ENCODE measurements at regions of chr4 and their contacts with region 1.

Region 1: DNA sequence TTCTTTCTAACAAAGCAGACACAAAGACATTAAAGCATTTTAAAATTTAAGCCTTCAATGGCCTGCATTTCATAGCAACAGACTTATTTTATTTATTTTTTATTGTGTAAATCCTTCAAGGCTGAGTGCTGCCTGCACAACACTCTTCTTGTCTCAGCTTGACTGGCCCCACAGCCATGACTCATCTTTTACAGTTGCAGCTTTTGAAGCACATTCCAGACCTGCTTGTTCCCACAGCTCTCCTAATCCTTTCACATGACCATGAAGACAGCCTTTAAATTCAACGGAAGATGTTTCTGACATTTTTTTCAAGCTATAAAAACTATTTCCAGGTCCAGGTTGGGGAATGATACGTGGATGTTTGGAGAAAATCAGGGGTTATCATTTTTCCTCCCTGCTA is 276.9 kb upstream of the TACR3 start:
- DNase-seq: peak; percentile 96
- H3K4me3 Mint-ChIP-seq: peak overlapping the region; percentile 47
- H3K27ac Mint-ChIP-seq: peak overlapping the region; percentile 92
- H3K4me1 Mint-ChIP-seq: peaks cover 26% of the 10 kb centered on the region
- H3K27me3 Mint-ChIP-seq: no peaks in the 10 kb centered on the region
- CTCF ChIP-seq: no peak

Region 2: DNA sequence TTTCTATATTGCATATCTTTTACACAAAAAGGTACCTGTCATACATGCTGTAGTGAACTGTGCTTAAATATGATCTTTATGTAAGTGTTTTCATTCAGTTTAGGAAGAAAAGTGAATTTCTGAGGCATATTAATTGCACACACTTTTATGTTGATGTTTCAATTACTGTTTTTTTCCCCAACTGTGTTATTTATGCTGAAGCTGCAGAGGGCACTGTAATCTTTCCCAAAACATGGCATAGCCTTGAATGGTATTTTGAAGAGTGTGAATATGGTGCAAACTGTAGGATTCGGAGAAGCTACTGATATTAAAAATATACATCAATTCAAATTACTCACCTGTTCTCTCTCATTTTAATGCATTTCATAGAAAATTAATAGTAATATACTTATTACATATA is 792.5 kb before region 1 on chr4:
- CTCF ChIA-PET with region 1: interaction called, 3 read pairs
- POLR2A ChIA-PET with region 1: no interaction called
- intact Hi-C with region 1: loop called (anchors 10 kb)
- DNase-seq: peak; percentile 46
- H3K4me3 Mint-ChIP-seq: no peak overlapping the region
- H3K27ac Mint-ChIP-seq: no peak overlapping the region
- H3K4me1 Mint-ChIP-seq: no peaks in the 10 kb centered on the region
- H3K27me3 Mint-ChIP-seq: no peaks in the 10 kb centered on the region
- CTCF ChIP-seq: peak; percentile 49

Region 3: DNA sequence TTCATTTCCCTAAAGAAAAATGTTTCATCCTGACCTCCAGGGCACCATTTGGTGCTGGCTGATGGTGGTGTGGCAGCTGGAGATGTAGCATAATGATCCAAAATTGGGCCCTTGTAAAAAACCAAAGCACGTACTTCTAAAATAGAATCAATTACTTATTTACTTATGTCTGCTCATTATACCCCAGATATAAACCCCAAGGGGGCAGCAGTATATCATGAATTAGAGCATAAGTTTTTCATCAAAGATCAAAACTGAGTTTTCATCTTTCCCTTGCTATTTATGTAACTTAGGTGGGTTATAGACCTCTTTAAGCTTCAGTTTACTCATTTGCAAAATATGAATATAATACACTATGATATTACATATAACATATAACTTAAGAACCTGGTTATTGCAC is 517.9 kb before region 1 on chr4:
- CTCF ChIA-PET with region 1: no interaction called
- POLR2A ChIA-PET with region 1: no interaction called
- intact Hi-C with region 1: loop called (anchors 5 kb)
- DNase-seq: peak; percentile 33
- H3K4me3 Mint-ChIP-seq: no peak overlapping the region
- H3K27ac Mint-ChIP-seq: no peak overlapping the region
- H3K4me1 Mint-ChIP-seq: no peaks in the 10 kb centered on the region
- H3K27me3 Mint-ChIP-seq: no peaks in the 10 kb centered on the region
- CTCF ChIP-seq: no peak

Region 4: DNA sequence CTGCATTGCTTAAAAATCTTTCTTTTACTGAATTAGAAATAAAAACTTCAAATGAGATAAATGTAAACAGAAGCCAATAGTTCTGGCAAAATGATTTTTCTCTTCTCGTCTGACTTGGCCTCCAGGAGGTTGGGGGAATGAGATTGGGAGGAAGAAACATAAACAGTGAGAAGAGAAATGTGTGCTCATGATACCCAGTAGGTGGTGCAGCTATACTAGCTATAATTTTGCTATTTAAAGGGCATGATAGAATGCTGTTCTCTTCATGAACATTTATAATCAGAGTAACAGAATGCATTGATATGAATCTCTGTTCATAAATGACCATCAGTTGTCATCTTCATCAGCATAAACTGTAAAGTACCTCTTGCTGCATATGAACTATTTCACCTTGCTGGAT is 362.4 kb before region 1 on chr4:
- CTCF ChIA-PET with region 1: interaction called, 3 read pairs
- POLR2A ChIA-PET with region 1: no interaction called
- intact Hi-C with region 1: loop called (anchors 5 kb)
- DNase-seq: peak; percentile 25
- H3K4me3 Mint-ChIP-seq: no peak overlapping the region
- H3K27ac Mint-ChIP-seq: no peak overlapping the region
- H3K4me1 Mint-ChIP-seq: no peaks in the 10 kb centered on the region
- H3K27me3 Mint-ChIP-seq: no peaks in the 10 kb centered on the region
- CTCF ChIP-seq: peak; percentile 22

Region 5: GRCh38 chr4:103853627-103854026 is 143.0 kb before region 1 on chr4:
- CTCF ChIA-PET with region 1: no interaction called
- POLR2A ChIA-PET with region 1: no interaction called
- intact Hi-C with region 1: no loop called
- DNase-seq: no peak
- H3K4me3 Mint-ChIP-seq: no peak overlapping the region
- H3K27ac Mint-ChIP-seq: no peak overlapping the region
- H3K4me1 Mint-ChIP-seq: no peaks in the 10 kb centered on the region
- H3K27me3 Mint-ChIP-seq: no peaks in the 10 kb centered on the region
- CTCF ChIP-seq: no peak

Region 6: GRCh38 chr4:104020641-104021040 is 24.0 kb after region 1 on chr4:
- CTCF ChIA-PET with region 1: no interaction called
- POLR2A ChIA-PET with region 1: no interaction called
- intact Hi-C with region 1: no loop called
- DNase-seq: no peak
- H3K4me3 Mint-ChIP-seq: no peak overlapping the region
- H3K27ac Mint-ChIP-seq: no peak overlapping the region
- H3K4me1 Mint-ChIP-seq: no peaks in the 10 kb centered on the region
- H3K27me3 Mint-ChIP-seq: no peaks in the 10 kb centered on the region
- CTCF ChIP-seq: no peak

Region 7: GRCh38 chr4:104064646-104065577 is 68.3 kb after region 1 on chr4:
- CTCF ChIA-PET with region 1: interaction called, 5 read pairs
- POLR2A ChIA-PET with region 1: no interaction called
- intact Hi-C with region 1: loop called (anchors 1 kb)
- DNase-seq: peak; percentile 72
- H3K4me3 Mint-ChIP-seq: no peak overlapping the region
- H3K27ac Mint-ChIP-seq: peak overlapping the region; percentile 2
- H3K4me1 Mint-ChIP-seq: no peaks in the 10 kb centered on the region
- H3K27me3 Mint-ChIP-seq: no peaks in the 10 kb centered on the region
- CTCF ChIP-seq: peak; percentile 63

Region 8: GRCh38 chr4:104826171-104826570 is 829.5 kb after region 1 on chr4:
- CTCF ChIA-PET with region 1: no interaction called
- POLR2A ChIA-PET with region 1: no interaction called
- intact Hi-C with region 1: no loop called
- DNase-seq: no peak
- H3K4me3 Mint-ChIP-seq: no peak overlapping the region
- H3K27ac Mint-ChIP-seq: no peak overlapping the region
- H3K4me1 Mint-ChIP-seq: no peaks in the 10 kb centered on the region
- H3K27me3 Mint-ChIP-seq: no peaks in the 10 kb centered on the region
- CTCF ChIP-seq: no peak

Region 9: GRCh38 chr4:104860238-104861123 is 863.8 kb after region 1 on chr4:
- CTCF ChIA-PET with region 1: interaction called, 11 read pairs
- POLR2A ChIA-PET with region 1: interaction called, 3 read pairs
- intact Hi-C with region 1: loop called (anchors 1 kb)
- DNase-seq: peak; percentile 78
- H3K4me3 Mint-ChIP-seq: no peak overlapping the region
- H3K27ac Mint-ChIP-seq: no peak overlapping the region
- H3K4me1 Mint-ChIP-seq: no peaks in the 10 kb centered on the region
- H3K27me3 Mint-ChIP-seq: no peaks in the 10 kb centered on the region
- CTCF ChIP-seq: peak; percentile 87

Region 10: DNA sequence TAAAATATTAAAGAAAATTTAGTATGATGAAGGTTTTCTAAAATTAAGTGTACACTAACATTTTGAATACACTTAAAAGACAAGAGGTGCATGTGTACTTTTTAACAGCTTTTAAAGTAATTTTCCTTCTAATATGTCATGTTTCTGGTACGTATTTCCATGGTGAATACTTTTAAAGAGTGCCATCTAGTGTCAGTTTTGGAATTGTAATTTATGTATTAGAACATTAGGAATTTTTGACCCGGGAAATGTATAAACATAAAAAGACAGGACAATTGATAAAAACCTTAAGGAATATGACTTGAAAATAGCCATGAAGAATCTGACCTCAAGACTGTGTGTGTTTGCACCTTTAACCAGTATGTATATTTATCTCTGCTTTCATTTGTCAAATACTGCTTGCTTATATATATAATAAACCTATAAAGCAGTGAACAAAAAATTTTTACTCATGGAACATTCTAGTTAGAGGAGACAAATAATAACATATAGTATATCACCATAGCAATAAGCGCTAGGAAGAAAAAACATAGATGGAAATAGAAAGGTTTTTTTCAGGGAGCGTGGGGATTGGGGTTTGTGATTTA is 1719.1 kb after region 1 on chr4:
- CTCF ChIA-PET with region 1: interaction called, 3 read pairs
- POLR2A ChIA-PET with region 1: interaction called, 9 read pairs
- intact Hi-C with region 1: loop called (anchors 5 kb)
- DNase-seq: peak; percentile 55
- H3K4me3 Mint-ChIP-seq: no peak overlapping the region
- H3K27ac Mint-ChIP-seq: peak overlapping the region; percentile 90
- H3K4me1 Mint-ChIP-seq: peaks cover 12% of the 10 kb centered on the region
- H3K27me3 Mint-ChIP-seq: no peaks in the 10 kb centered on the region
- CTCF ChIP-seq: no peak